ENCODE measurements at regions of chr6 and their contacts with region 1.

Region 1: DNA sequence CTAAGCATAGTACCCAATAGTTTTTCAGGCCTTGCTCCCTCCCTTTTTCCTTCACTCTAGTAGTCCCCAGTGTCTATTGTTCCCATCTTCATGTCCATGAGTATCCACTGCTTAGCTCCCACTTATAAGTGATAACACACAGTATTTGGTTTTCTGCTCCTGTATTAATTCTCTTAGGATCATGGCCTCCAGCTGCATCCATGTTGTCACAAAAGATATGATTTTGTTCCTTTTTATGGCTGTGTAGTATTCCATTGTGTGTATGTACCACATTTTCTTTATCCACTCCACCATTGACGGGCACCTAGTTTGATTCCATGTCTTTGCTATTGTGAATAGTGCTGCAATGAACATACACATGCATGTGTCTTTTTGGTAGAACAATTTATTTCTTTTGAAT is 102.9 kb downstream of the FAXC start:
- DNase-seq: no peak
- H3K4me3 ChIP-seq: no peak overlapping the region
- H3K27ac ChIP-seq: no peak overlapping the region
- H3K4me1 ChIP-seq: no peaks in the 10 kb centered on the region
- H3K27me3 ChIP-seq: no peaks in the 10 kb centered on the region
- CTCF ChIP-seq: no peak
- EP300 ChIP-seq: no peak
- POLR2A ChIP-seq: no peak

Region 2: DNA sequence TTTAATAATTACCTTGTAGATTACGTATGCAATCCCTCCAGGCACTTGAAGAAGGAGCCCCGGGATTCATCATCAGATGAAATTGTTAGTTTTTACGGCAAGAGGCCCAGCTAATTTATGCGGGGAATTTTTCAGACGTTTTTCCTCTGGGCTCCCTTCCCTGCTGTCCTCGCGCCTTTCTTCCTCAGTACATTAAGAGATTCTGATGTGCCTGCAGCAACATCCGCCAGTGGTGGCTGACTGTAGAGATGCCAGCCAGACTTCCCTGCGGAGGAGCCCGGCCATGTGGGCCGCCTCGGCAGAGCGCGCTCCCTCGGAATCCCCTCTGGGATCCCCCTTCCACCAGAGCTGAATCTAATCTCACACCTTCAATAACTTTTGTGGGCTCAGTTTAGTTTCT is 458.6 kb before region 1 on chr6:
- intact Hi-C with region 1: loop called in 1 of 4 experiments (anchors 5 kb)
- DNase-seq: no peak
- H3K4me3 ChIP-seq: no peak overlapping the region
- H3K27ac ChIP-seq: no peak overlapping the region
- H3K4me1 ChIP-seq: no peaks in the 10 kb centered on the region
- H3K27me3 ChIP-seq: no peaks in the 10 kb centered on the region
- CTCF ChIP-seq: no peak
- EP300 ChIP-seq: no peak
- POLR2A ChIP-seq: no peak

Region 3: DNA sequence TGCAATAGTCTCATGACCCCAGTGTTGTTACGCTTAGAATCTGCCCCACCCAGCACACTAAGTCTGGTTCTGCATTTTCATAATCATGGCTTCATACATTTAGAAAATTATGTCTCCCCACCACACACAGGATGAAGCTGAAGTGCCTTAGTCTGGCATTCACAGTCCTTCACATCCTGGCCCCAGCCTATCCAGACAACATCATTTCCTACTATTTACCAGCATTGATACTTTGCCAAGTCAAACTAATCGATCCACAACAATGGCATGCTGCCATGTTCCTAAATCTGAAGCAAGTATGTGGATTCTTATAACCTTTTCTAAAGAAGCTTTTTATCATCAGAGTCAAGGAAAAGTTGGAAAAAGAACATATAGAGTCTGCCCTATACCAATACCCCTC is 166.4 kb before region 1 on chr6:
- intact Hi-C with region 1: no loop called
- DNase-seq: no peak
- H3K4me3 ChIP-seq: no peak overlapping the region
- H3K27ac ChIP-seq: no peak overlapping the region
- H3K4me1 ChIP-seq: no peaks in the 10 kb centered on the region
- H3K27me3 ChIP-seq: no peaks in the 10 kb centered on the region
- CTCF ChIP-seq: no peak
- EP300 ChIP-seq: no peak
- POLR2A ChIP-seq: no peak

Region 4: GRCh38 chr6:100311707-100312251 is 1065.2 kb after region 1 on chr6:
- intact Hi-C with region 1: no loop called
- DNase-seq: no peak
- H3K4me3 ChIP-seq: no peak overlapping the region
- H3K27ac ChIP-seq: no peak overlapping the region
- H3K4me1 ChIP-seq: no peaks in the 10 kb centered on the region
- H3K27me3 ChIP-seq: no peaks in the 10 kb centered on the region
- CTCF ChIP-seq: no peak
- EP300 ChIP-seq: no peak
- POLR2A ChIP-seq: no peak